Activated CD8-positive, alpha-beta T cell treated with anti-CD3 and anti-CD28 coated beads, Interleukin-2, amount 10 ng/mL, durations not matched to agents 7 days and 5 days (primary cell): ENCODE measurements at regions of chr7 and their contacts with region 1.

Region 1: GRCh38 chr7:157397731-157398691 is 61.2 kb downstream of the DNAJB6 start:
- DNase-seq: peak; percentile 46
- ATAC-seq: peak; percentile 47
- H3K4me3 Mint-ChIP-seq: no peak overlapping the region
- H3K27ac Mint-ChIP-seq: peak overlapping the region; percentile 68
- H3K4me1 Mint-ChIP-seq: peaks cover 19% of the 10 kb centered on the region
- H3K27me3 Mint-ChIP-seq: no peaks in the 10 kb centered on the region

Region 2: GRCh38 chr7:157386979-157387800 is 10.8 kb before region 1 on chr7:
- CTCF ChIA-PET with region 1: interaction called, 13 read pairs
- POLR2A ChIA-PET with region 1: no interaction called
- DNase-seq: peak; percentile 93
- ATAC-seq: peak; percentile 88
- H3K4me3 Mint-ChIP-seq: no peak overlapping the region
- H3K27ac Mint-ChIP-seq: peak overlapping the region; percentile 28
- H3K4me1 Mint-ChIP-seq: peaks cover 50% of the 10 kb centered on the region
- H3K27me3 Mint-ChIP-seq: no peaks in the 10 kb centered on the region

Region 3: DNA sequence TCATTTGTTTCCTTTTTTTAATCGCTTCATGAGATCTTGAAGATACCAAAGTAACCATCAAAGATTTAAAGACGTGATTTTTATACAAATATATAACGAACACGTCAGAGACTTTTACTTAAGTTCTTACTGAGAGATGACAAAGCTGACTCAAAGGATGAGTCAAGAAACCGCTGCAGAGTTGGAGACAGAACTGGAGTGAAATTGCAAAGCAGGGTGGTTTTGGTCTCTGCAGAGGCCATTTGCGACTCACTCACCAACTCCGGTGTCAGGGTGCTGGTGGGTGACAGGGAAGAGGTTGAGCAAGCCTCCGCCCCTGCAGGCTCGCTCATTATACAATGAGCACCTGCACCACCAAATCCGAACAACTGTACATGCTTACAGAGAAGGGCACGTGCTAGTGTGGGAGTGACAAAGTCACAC is 14.0 kb after region 1 on chr7:
- CTCF ChIA-PET with region 1: no interaction called
- POLR2A ChIA-PET with region 1: no interaction called
- DNase-seq: peak; percentile 33
- ATAC-seq: no peak
- H3K4me3 Mint-ChIP-seq: no peak overlapping the region
- H3K27ac Mint-ChIP-seq: peak overlapping the region; percentile 21
- H3K4me1 Mint-ChIP-seq: peaks cover 6% of the 10 kb centered on the region
- H3K27me3 Mint-ChIP-seq: no peaks in the 10 kb centered on the region